ENCODE measurements at regions of chr19 and their contacts with region 1.

Region 1: GRCh38 chr19:32580901-32581703 is at the start of gene PDCD5:
- DNase-seq: peak; percentile 96 to 98 (median 97)
- ATAC-seq: peak; percentile 93
- H3K4me3 ChIP-seq: peak within 1 kb of the TSS; percentile 66 to 87
- H3K4me3 Mint-ChIP-seq: peak within 1 kb of the TSS; percentile 95
- H3K27ac ChIP-seq: peak within 1 kb of the TSS; percentile 57 to 70
- H3K27ac Mint-ChIP-seq: peak within 1 kb of the TSS; percentile 93
- H3K4me1 ChIP-seq: peaks cover 21% of the 10 kb centered on the region
- H3K4me1 Mint-ChIP-seq: peaks cover 35% of the 10 kb centered on the region
- H3K27me3 ChIP-seq: peaks cover 0 to 3% of the 10 kb centered on the region in 2 experiments
- H3K27me3 Mint-ChIP-seq: no peaks in the 10 kb centered on the region
- CTCF ChIP-seq: no peak
- total RNA-seq, gene PDCD5: 24.9 to 26.6 TPM

Region 2: GRCh38 chr19:31349160-31349881 is 1231.8 kb before region 1 on chr19 and contains the start of gene TSHZ3:
- CTCF ChIA-PET with region 1: no interaction called
- POLR2A ChIA-PET with region 1: no interaction called
- intact Hi-C with region 1: loop called in 1 of 2 experiments (anchors 10 kb)
- DNase-seq: peak in 6 of 9 experiments; percentile 12 to 69 (median 48)
- ATAC-seq: peak; percentile 45
- H3K4me3 ChIP-seq: peak within 1 kb of the TSS; percentile 37 to 48
- H3K4me3 Mint-ChIP-seq: peak within 1 kb of the TSS; percentile 74
- H3K27ac ChIP-seq: no peak within 1 kb of the TSS
- H3K27ac Mint-ChIP-seq: no peak within 1 kb of the TSS
- H3K4me1 ChIP-seq: peaks cover 22% of the 10 kb centered on the region
- H3K4me1 Mint-ChIP-seq: peaks cover 23% of the 10 kb centered on the region
- H3K27me3 ChIP-seq: peaks cover 30 to 53% of the 10 kb centered on the region in 2 experiments
- H3K27me3 Mint-ChIP-seq: peaks cover 58% of the 10 kb centered on the region
- CTCF ChIP-seq: no peak
- total RNA-seq, gene TSHZ3: not detected

Region 3: GRCh38 chr19:32405431-32406161 is 175.5 kb before region 1 on chr19 and contains the start of gene DPY19L3:
- CTCF ChIA-PET with region 1: no interaction called
- POLR2A ChIA-PET with region 1: interaction called, 13 read pairs
- intact Hi-C with region 1: loop called (anchors 1 kb)
- DNase-seq: peak; percentile 73 to 93 (median 89)
- ATAC-seq: peak; percentile 88
- H3K4me3 ChIP-seq: peak within 1 kb of the TSS; percentile 73 to 79
- H3K4me3 Mint-ChIP-seq: peak within 1 kb of the TSS; percentile 90
- H3K27ac ChIP-seq: peak within 1 kb of the TSS; percentile 87 to 91
- H3K27ac Mint-ChIP-seq: peak within 1 kb of the TSS; percentile 92
- H3K4me1 ChIP-seq: peaks cover 14% of the 10 kb centered on the region
- H3K4me1 Mint-ChIP-seq: peaks cover 22% of the 10 kb centered on the region
- H3K27me3 ChIP-seq: no peaks in the 10 kb centered on the region
- H3K27me3 Mint-ChIP-seq: no peaks in the 10 kb centered on the region
- CTCF ChIP-seq: no peak
- total RNA-seq, gene DPY19L3: 7.9 TPM

Region 4: GRCh38 chr19:32691291-32691951 is 110.3 kb after region 1 on chr19 and contains the start of gene NUDT19:
- CTCF ChIA-PET with region 1: no interaction called
- POLR2A ChIA-PET with region 1: no interaction called
- intact Hi-C with region 1: loop called (anchors 5 kb)
- DNase-seq: peak; percentile 53 to 85 (median 75)
- ATAC-seq: peak; percentile 79
- H3K4me3 ChIP-seq: peak within 1 kb of the TSS; percentile 60 to 79
- H3K4me3 Mint-ChIP-seq: peak within 1 kb of the TSS; percentile 92
- H3K27ac ChIP-seq: peak within 1 kb of the TSS; percentile 35 to 74
- H3K27ac Mint-ChIP-seq: peak within 1 kb of the TSS; percentile 90
- H3K4me1 ChIP-seq: peaks cover 35% of the 10 kb centered on the region
- H3K4me1 Mint-ChIP-seq: peaks cover 52% of the 10 kb centered on the region
- H3K27me3 ChIP-seq: no peaks in the 10 kb centered on the region
- H3K27me3 Mint-ChIP-seq: no peaks in the 10 kb centered on the region
- CTCF ChIP-seq: no peak
- total RNA-seq, gene NUDT19: 15.3 to 18.0 TPM

Region 5: GRCh38 chr19:33521480-33522370 is 940.6 kb after region 1 on chr19 and contains the start of gene PEPD:
- CTCF ChIA-PET with region 1: no interaction called
- POLR2A ChIA-PET with region 1: no interaction called
- intact Hi-C with region 1: loop called in 1 of 2 experiments (anchors 5 kb)
- DNase-seq: peak; percentile 59 to 90 (median 78)
- ATAC-seq: peak; percentile 97
- H3K4me3 ChIP-seq: peak within 1 kb of the TSS; percentile 63 to 81
- H3K4me3 Mint-ChIP-seq: peak within 1 kb of the TSS; percentile 89
- H3K27ac ChIP-seq: peak within 1 kb of the TSS; percentile 39 to 48
- H3K27ac Mint-ChIP-seq: peak within 1 kb of the TSS; percentile 85
- H3K4me1 ChIP-seq: peaks cover 18% of the 10 kb centered on the region
- H3K4me1 Mint-ChIP-seq: peaks cover 26% of the 10 kb centered on the region
- H3K27me3 ChIP-seq: no peaks in the 10 kb centered on the region
- H3K27me3 Mint-ChIP-seq: no peaks in the 10 kb centered on the region
- CTCF ChIP-seq: no peak
- total RNA-seq, gene PEPD: 14.1 to 14.4 TPM